ENCODE measurements at regions of chr5 and their contacts with region 1.

Region 1: GRCh38 chr5:126499853-126500342 is 76.7 kb downstream of the GRAMD2B start:
- DNase-seq: no peak
- ATAC-seq: peak; percentile 84
- H3K4me3 ChIP-seq: no peak overlapping the region
- H3K27ac ChIP-seq: no peak overlapping the region
- H3K4me1 ChIP-seq: no peaks in the 10 kb centered on the region
- H3K27me3 ChIP-seq: no peaks in the 10 kb centered on the region
- CTCF ChIP-seq: peak; percentile 54 to 69 (median 69)
- EP300 ChIP-seq: no peak
- POLR2A ChIP-seq: no peak
- RAD21 ChIP-seq: peak; percentile 74

Region 2: DNA sequence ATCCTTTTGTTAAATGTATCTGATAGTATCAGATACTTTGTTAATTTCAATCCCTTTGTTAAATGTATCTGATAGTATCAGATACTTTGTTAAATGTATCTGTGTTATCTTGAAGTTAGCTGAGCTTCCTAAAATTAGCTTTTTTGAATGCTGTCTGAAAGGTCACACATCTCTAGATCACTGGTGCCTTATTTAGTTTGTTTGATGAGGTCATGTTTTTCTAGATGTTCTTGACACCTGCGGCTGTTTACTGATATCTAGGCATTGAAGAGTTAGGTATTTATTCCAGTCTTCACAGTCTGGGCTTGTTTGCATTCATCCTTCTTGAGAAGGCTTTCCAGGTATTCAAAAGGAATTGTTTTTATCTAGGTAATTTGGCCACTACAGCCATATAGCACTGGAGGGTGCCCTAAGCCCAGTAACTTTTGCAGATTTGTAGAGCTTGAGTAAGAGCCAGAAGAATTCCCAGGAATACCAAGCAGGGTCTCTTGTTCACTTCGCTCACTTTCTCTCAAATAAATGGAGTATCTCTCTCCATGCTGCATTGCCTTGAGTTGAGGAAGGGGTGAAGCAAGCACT is 512.1 kb before region 1 on chr5:
- CTCF ChIA-PET with region 1: no interaction called
- POLR2A ChIA-PET with region 1: no interaction called
- RAD21 ChIA-PET with region 1: no interaction called
- SMC1A ChIA-PET with region 1: no interaction called
- in situ Hi-C with region 1: no loop called
- intact Hi-C with region 1: no loop called
- DNase-seq: no peak
- ATAC-seq: no peak
- H3K4me3 ChIP-seq: no peak overlapping the region
- H3K27ac ChIP-seq: no peak overlapping the region
- H3K4me1 ChIP-seq: no peaks in the 10 kb centered on the region
- H3K27me3 ChIP-seq: no peaks in the 10 kb centered on the region
- CTCF ChIP-seq: no peak
- EP300 ChIP-seq: no peak
- POLR2A ChIP-seq: no peak
- RAD21 ChIP-seq: no peak

Region 3: DNA sequence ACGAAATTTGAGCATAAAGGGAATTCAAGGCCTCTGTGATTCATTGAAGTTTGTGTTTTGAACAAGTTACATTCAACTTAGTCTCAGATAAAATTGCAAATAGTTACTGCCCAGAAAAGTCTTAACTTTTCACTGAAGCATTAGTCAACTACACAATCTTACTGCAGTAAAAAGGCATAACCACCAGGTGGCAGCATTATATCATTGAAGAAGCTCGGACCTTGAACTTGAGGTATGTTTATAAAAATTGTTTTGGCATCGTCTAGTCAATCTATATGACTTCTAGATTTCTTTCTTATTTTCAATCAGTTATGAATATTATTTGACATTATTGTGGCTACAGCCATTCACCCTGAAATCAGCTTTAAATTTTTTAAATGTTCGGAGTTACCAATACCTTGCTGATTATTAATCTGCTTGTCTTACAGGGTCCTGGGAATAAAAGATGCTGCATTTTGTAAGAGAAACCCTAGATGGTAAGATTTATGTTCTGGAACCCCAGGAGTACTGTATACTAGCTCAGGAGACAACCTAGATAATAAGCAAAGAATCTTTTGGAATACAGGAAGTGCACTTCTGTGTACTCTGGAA is 160.6 kb before region 1 on chr5:
- CTCF ChIA-PET with region 1: interaction called, 57 read pairs
- POLR2A ChIA-PET with region 1: no interaction called
- RAD21 ChIA-PET with region 1: interaction called, 9 read pairs
- SMC1A ChIA-PET with region 1: interaction called, 25 read pairs
- in situ Hi-C with region 1: no loop called
- intact Hi-C with region 1: no loop called
- DNase-seq: no peak
- ATAC-seq: peak; percentile 62
- H3K4me3 ChIP-seq: no peak overlapping the region
- H3K27ac ChIP-seq: no peak overlapping the region
- H3K4me1 ChIP-seq: no peaks in the 10 kb centered on the region
- H3K27me3 ChIP-seq: no peaks in the 10 kb centered on the region
- CTCF ChIP-seq: peak; percentile 60 to 80 (median 74); a peak in 5 of 6 replicates
- EP300 ChIP-seq: no peak
- POLR2A ChIP-seq: no peak
- RAD21 ChIP-seq: peak; percentile 89

Region 4: DNA sequence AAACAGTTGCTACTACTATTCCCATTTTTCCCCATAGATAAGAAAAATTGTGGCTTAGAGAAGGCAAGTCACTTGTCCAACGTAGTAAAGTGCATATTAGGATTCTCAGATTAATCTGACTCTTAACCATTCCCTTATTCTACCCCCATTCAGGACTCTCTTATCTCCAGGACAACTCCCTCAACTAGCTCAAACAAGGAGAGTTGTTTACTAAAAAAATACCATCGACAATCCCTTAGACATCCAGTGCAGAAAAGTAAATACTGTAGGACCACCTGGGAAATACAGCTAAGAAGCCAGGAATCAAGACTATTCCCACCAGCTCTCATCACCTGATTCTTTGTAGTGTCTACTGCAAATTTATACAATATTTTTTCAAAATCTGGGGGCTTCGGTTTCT is 86.0 kb before region 1 on chr5:
- CTCF ChIA-PET with region 1: no interaction called
- POLR2A ChIA-PET with region 1: no interaction called
- RAD21 ChIA-PET with region 1: no interaction called
- SMC1A ChIA-PET with region 1: no interaction called
- in situ Hi-C with region 1: no loop called
- intact Hi-C with region 1: no loop called
- DNase-seq: no peak
- ATAC-seq: no peak
- H3K4me3 ChIP-seq: no peak overlapping the region
- H3K27ac ChIP-seq: no peak overlapping the region
- H3K4me1 ChIP-seq: no peaks in the 10 kb centered on the region
- H3K27me3 ChIP-seq: no peaks in the 10 kb centered on the region
- CTCF ChIP-seq: no peak
- EP300 ChIP-seq: no peak
- POLR2A ChIP-seq: no peak
- RAD21 ChIP-seq: no peak

Region 5: GRCh38 chr5:126471875-126472537 is 27.9 kb before region 1 on chr5:
- CTCF ChIA-PET with region 1: interaction called, 14 read pairs
- POLR2A ChIA-PET with region 1: no interaction called
- RAD21 ChIA-PET with region 1: no interaction called
- SMC1A ChIA-PET with region 1: interaction called, 4 read pairs
- in situ Hi-C with region 1: no loop called
- intact Hi-C with region 1: no loop called
- DNase-seq: no peak
- ATAC-seq: no peak
- H3K4me3 ChIP-seq: no peak overlapping the region
- H3K27ac ChIP-seq: no peak overlapping the region
- H3K4me1 ChIP-seq: no peaks in the 10 kb centered on the region
- H3K27me3 ChIP-seq: no peaks in the 10 kb centered on the region
- CTCF ChIP-seq: no peak
- EP300 ChIP-seq: no peak
- POLR2A ChIP-seq: no peak
- RAD21 ChIP-seq: no peak

Region 6: GRCh38 chr5:126516133-126516532 is 16.2 kb after region 1 on chr5:
- CTCF ChIA-PET with region 1: interaction called, 16 read pairs
- POLR2A ChIA-PET with region 1: no interaction called
- RAD21 ChIA-PET with region 1: no interaction called
- SMC1A ChIA-PET with region 1: interaction called, 8 read pairs
- in situ Hi-C with region 1: no loop called
- intact Hi-C with region 1: no loop called
- DNase-seq: no peak
- ATAC-seq: no peak
- H3K4me3 ChIP-seq: no peak overlapping the region
- H3K27ac ChIP-seq: no peak overlapping the region
- H3K4me1 ChIP-seq: no peaks in the 10 kb centered on the region
- H3K27me3 ChIP-seq: no peaks in the 10 kb centered on the region; a peak in 1 of 4 replicates
- CTCF ChIP-seq: no peak
- EP300 ChIP-seq: no peak
- POLR2A ChIP-seq: no peak
- RAD21 ChIP-seq: no peak

Region 7: DNA sequence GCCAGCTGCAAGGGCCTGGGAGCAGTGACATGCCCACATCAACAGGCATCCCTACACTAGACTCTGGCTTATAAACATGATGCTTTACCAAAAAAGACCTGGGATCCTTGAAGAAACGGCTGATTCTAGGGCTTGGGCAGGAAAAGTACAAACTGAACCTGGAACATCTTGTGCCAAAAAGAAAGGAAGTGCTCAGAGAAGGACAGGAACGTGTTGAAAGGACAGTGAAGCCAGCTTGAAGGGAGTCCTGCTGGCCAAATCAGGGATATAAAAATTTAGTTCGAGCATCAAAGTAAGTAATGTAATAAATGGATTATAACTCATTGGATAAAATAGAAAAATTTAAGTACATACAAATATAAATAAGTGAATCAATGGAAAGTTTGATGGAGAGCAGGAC is 37.0 kb after region 1 on chr5:
- CTCF ChIA-PET with region 1: interaction called, 9 read pairs
- POLR2A ChIA-PET with region 1: no interaction called
- RAD21 ChIA-PET with region 1: no interaction called
- SMC1A ChIA-PET with region 1: interaction called, 3 read pairs
- in situ Hi-C with region 1: no loop called
- intact Hi-C with region 1: loop called (anchors 5 kb)
- DNase-seq: no peak
- ATAC-seq: no peak
- H3K4me3 ChIP-seq: no peak overlapping the region
- H3K27ac ChIP-seq: no peak overlapping the region
- H3K4me1 ChIP-seq: no peaks in the 10 kb centered on the region
- H3K27me3 ChIP-seq: no peaks in the 10 kb centered on the region
- CTCF ChIP-seq: no peak
- EP300 ChIP-seq: no peak
- POLR2A ChIP-seq: no peak
- RAD21 ChIP-seq: no peak